ENCODE measurements at regions of chr3 and their contacts with region 1.

Region 1: DNA sequence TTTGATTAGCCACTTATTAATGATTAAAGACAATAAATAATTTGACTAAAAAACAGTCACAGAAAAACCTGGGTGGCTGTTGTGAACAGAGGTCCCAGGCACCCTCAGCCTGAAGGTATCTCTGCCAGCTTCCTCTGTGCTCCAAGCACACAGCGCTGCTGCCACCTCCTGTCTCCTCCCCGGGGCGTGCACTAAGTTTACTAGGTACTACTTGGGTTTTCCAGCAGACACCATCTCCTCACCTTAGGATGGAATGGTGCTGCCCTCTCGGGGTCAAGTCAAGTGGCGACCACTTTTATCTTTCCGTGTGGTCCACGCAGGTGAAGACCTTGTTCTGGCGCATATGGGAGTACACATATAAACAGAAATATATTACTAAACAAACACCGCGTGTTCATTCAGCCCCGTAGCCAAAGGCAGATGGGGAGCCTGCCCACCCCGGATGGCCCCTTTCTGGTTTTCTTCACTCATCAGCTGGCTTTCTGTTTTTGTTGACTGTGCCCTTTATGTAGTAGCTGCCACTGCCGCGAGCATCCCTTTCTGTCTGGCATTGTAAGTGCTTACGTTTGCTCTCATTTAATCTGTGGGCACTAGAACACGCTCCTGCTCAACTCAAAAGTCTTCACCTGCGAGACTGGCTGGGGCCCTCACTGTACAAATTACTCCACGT is 128.0 kb downstream of the LRIG1 start:
- DNase-seq: peak; percentile 64
- H3K4me3 ChIP-seq: peak overlapping the region; percentile 49
- H3K27ac ChIP-seq: peak overlapping the region; percentile 86
- H3K4me1 ChIP-seq: peaks cover 58% of the 10 kb centered on the region
- H3K27me3 ChIP-seq: no peaks in the 10 kb centered on the region
- CTCF ChIP-seq: peak; percentile 68

Region 2: GRCh38 chr3:66253790-66254620 is 118.8 kb before region 1 on chr3:
- intact Hi-C with region 1: no loop called
- DNase-seq: no peak
- H3K4me3 ChIP-seq: no peak overlapping the region
- H3K27ac ChIP-seq: no peak overlapping the region
- H3K4me1 ChIP-seq: no peaks in the 10 kb centered on the region
- H3K27me3 ChIP-seq: no peaks in the 10 kb centered on the region
- CTCF ChIP-seq: peak; percentile 85

Region 3: DNA sequence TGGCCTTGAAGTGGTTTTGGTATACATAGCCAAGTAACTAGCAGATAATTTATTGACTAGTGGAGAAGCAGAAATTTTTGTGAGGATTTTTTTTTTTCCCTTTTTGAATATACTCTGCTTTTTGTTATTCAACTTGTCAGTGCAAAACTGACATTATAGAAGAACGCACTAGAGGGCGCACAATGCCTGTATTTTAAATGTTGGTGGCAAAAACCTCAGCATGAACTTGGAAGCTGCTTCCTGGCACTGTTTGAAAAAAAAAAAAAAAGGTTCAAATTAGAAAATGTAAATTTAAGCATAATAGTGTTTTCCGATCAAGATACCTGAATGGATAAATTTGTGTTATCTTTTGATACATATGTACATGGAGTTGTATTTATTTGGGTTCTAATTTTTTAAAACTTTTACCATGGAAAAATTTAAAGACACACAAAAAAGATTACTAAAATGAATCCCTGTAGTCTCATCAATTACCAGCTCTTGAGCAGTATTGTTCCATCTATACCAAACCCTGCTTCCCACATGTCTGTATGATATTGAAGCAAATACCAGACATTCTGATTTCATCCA is 96.0 kb before region 1 on chr3:
- intact Hi-C with region 1: loop called (anchors 5 kb)
- DNase-seq: no peak
- H3K4me3 ChIP-seq: no peak overlapping the region
- H3K27ac ChIP-seq: no peak overlapping the region
- H3K4me1 ChIP-seq: peaks cover 3% of the 10 kb centered on the region
- H3K27me3 ChIP-seq: no peaks in the 10 kb centered on the region
- CTCF ChIP-seq: peak; percentile 81

Region 4: DNA sequence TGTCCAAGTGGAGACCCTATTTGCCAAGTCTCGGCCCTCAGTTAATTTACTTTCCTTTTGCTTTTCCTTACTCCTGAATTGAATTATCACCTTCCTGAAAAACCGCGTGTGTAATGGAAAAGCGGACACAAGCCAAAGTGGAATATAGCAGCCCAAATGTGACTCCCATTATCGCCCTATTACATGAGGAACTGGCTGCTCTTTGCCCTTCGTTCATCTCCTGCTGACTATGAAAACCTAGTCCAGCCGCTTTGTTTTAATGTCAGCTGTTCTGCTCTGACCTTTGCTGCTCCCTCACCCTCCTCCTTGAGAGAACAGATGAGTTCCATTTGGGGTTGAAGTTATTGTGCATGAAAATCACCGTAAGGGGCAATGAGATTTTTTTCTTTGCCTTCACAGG is 1914.3 kb after region 1 on chr3:
- intact Hi-C with region 1: no loop called
- DNase-seq: no peak
- H3K4me3 ChIP-seq: no peak overlapping the region
- H3K27ac ChIP-seq: no peak overlapping the region
- H3K4me1 ChIP-seq: no peaks in the 10 kb centered on the region
- H3K27me3 ChIP-seq: no peaks in the 10 kb centered on the region
- CTCF ChIP-seq: no peak

Measured in left ventricle myocardium inferior (tissue), 1 donor.